Esophagus muscularis mucosa (tissue), 4 donors: ENCODE measurements at regions of chr17 and their contacts with region 1.

Region 1: DNA sequence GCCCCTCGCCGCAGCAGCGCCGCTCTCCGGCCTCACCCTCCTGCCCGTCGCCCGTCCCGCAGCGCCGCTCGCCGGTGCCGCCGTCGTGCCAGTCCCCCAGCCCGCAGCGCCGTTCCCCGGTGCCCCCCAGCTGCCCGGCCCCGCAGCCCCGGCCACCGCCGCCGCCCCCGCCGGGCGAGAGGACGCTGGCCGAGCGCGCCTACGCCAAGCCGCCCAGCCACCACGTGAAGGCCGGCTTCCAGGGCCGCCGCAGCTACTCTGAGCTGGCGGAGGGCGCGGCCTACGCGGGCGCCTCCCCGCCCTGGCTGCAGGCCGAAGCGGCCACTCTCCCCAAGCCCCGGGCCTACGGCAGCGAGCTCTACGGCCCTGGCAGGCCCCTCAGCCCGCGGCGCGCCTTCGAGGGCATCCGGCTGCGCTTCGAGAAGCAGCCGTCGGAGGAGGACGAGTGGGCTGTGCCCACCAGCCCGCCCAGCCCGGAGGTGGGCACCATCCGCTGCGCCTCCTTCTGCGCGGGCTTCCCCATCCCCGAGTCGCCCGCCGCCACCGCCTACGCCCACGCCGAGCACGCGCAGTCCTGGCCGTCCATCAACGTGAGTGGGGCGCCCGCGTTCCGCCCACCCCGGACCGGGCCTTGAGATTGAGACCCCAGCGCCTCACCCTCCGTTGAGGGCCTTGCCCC is 15.0 kb downstream of the TBKBP1 start:
- DNase-seq: no peak
- H3K4me3 ChIP-seq: peak overlapping the region; percentile 48 to 63 (median 51)
- H3K27ac ChIP-seq: peak overlapping the region; percentile 47 to 77 (median 62)
- H3K4me1 ChIP-seq: peaks cover 29 to 53% (median 37%) of the 10 kb centered on the region in 4 donors
- H3K27me3 ChIP-seq: peaks cover 0 to 11% (median 3%) of the 10 kb centered on the region in 4 donors
- CTCF ChIP-seq: no peak
- EP300 ChIP-seq: no peak
- POLR2A ChIP-seq: no peak

Region 2: GRCh38 chr17:47644324-47644723 is 64.7 kb before region 1 on chr17:
- intact Hi-C with region 1: no loop called
- DNase-seq: no peak
- H3K4me3 ChIP-seq: no peak overlapping the region
- H3K27ac ChIP-seq: no peak overlapping the region
- H3K4me1 ChIP-seq: peaks cover 9 to 15% (median 11%) of the 10 kb centered on the region in 4 donors
- H3K27me3 ChIP-seq: no peaks in the 10 kb centered on the region
- CTCF ChIP-seq: no peak
- EP300 ChIP-seq: no peak
- POLR2A ChIP-seq: no peak

Region 3: DNA sequence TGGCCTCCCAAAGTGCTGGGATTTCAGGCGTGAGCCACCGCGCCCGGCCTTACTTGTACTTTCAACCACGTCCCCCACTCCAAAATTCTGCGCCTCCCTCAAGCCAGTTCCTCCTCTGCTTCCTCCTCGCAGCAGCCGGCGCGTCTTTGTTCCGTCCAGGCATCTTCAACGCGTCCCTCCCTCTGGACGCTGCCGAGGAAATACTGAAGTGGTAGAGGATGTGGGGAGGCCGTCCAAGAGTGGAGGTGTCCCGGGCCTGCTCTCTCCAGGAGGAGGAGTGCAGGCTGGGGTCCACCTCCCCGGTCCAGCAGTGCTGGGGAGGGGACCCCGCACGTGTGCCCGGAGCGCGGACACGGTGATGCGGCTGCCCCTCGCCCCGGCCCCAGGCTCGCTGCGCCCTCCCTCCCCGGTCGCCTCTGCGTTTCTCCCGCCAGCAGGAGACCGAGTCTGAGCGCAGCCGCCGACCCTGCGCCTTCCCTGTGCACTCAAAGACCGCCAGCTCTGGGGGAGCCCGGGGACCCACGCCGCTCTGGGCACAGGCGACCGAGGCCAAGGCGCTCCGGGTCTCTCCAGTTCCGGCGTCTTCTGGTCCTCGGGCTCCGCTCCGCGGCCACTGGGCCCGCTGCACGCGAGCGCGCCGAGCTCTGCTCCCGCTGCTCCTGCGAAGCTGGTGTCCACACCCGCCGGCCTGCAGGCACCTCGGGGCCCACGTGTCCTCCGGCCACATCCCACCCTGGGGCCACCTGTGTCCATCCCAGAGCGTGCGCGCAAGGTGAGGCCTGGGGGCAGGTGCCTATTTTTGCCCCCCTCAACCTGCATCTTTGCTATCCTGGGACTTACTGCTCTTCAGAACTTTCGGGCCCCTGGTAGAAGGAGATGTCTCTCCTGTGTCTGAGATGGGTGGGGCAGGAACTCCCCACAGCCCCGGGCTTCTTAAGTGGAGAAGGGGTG is 80.9 kb after region 1 on chr17:
- intact Hi-C with region 1: loop called (anchors 10 kb)
- DNase-seq: peak; percentile 90
- H3K4me3 ChIP-seq: peak overlapping the region; percentile 50 to 60 (median 53)
- H3K27ac ChIP-seq: peak overlapping the region in 1 of 4 donors; percentile 32
- H3K4me1 ChIP-seq: peaks cover 9 to 11% (median 10%) of the 10 kb centered on the region in 4 donors
- H3K27me3 ChIP-seq: peaks cover 0 to 94% (median 30%) of the 10 kb centered on the region in 4 donors
- CTCF ChIP-seq: peak; percentile 51 to 65 (median 51)
- EP300 ChIP-seq: no peak
- POLR2A ChIP-seq: no peak

Region 4: GRCh38 chr17:47905221-47905781 is 196.3 kb after region 1 on chr17:
- intact Hi-C with region 1: no loop called
- DNase-seq: no peak
- H3K4me3 ChIP-seq: peak overlapping the region in 3 of 4 donors; percentile 9 to 16 (median 10)
- H3K27ac ChIP-seq: peak overlapping the region; percentile 80 to 89 (median 86)
- H3K4me1 ChIP-seq: peaks cover 72 to 96% (median 87%) of the 10 kb centered on the region in 4 donors
- H3K27me3 ChIP-seq: no peaks in the 10 kb centered on the region
- CTCF ChIP-seq: no peak
- EP300 ChIP-seq: no peak
- POLR2A ChIP-seq: no peak